ENCODE measurements at regions of chrX and their contacts with region 1.

Region 1: DNA sequence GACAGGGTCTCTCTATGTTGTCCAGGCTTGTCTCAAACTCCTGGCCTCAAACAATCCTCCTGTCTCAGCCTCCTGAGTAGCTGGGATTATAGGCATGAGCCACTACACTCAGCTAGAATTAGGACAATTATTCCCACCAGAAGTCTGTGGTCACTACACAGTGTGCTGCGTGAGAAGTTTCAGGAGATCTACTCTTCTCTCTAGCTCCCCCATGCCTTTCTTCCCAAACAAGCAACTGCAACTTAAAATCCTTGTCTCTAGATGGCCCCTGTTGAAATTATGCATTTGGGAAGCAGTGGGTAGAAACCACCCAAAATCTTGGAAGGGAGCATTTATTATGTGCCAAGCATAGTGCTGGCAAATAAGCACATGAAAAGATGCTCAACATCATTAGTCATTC is 21.1 kb upstream of the MAP7D3 start:
- DNase-seq: no peak
- H3K4me3 ChIP-seq: no peak overlapping the region
- H3K27ac ChIP-seq: no peak overlapping the region
- H3K4me1 ChIP-seq: peaks cover 0 to 8% (median 2%) of the 10 kb centered on the region in 4 donors
- H3K27me3 ChIP-seq: no peaks in the 10 kb centered on the region
- CTCF ChIP-seq: no peak
- EP300 ChIP-seq: no peak
- POLR2A ChIP-seq: no peak

Region 2: GRCh38 chrX:134478374-134478773 is 1794.0 kb before region 1 on chrX:
- in situ Hi-C with region 1: no loop called
- intact Hi-C with region 1: loop called (anchors 5 kb)
- DNase-seq: no peak
- H3K4me3 ChIP-seq: no peak overlapping the region
- H3K27ac ChIP-seq: no peak overlapping the region
- H3K4me1 ChIP-seq: no peaks in the 10 kb centered on the region
- H3K27me3 ChIP-seq: no peaks in the 10 kb centered on the region
- CTCF ChIP-seq: no peak
- EP300 ChIP-seq: no peak
- POLR2A ChIP-seq: no peak

Region 3: GRCh38 chrX:135973548-135974278 is 298.6 kb before region 1 on chrX and contains the start of gene MMGT1:
- in situ Hi-C with region 1: no loop called
- intact Hi-C with region 1: no loop called
- DNase-seq: peak; percentile 85
- H3K4me3 ChIP-seq: peak within 1 kb of the TSS; percentile 47 to 83 (median 69)
- H3K27ac ChIP-seq: peak within 1 kb of the TSS; percentile 89 to 96 (median 95)
- H3K4me1 ChIP-seq: peaks cover 0 to 16% (median 6%) of the 10 kb centered on the region in 4 donors
- H3K27me3 ChIP-seq: no peaks in the 10 kb centered on the region
- CTCF ChIP-seq: peak in 3 of 5 experiments; percentile 12 to 51 (median 33)
- EP300 ChIP-seq: no peak
- POLR2A ChIP-seq: peak; percentile 65
- total RNA-seq, gene MMGT1: 2.0 to 27.0 (median 15.7) TPM

Region 4: DNA sequence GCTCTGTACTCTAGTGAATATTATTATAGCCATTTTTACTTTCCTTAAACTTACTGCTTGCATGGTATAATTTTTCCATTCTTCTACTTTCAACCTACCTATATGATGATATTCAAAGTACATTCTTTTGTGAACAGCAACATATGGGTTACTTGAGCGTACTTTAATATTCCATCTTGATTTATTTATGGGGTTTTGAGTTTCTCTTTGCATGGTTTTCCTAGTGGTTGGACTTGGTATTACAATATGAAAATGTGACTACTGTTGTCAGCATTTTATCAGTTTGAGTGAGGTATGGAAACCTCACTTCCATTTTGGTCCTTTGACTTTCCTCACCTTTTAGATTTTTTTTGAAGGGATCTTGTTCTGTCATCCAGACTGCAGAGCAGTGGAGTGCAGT is 64.3 kb after region 1 on chrX:
- in situ Hi-C with region 1: no loop called
- intact Hi-C with region 1: no loop called
- DNase-seq: no peak
- H3K4me3 ChIP-seq: no peak overlapping the region
- H3K27ac ChIP-seq: no peak overlapping the region
- H3K4me1 ChIP-seq: no peaks in the 10 kb centered on the region
- H3K27me3 ChIP-seq: no peaks in the 10 kb centered on the region
- CTCF ChIP-seq: peak in 3 of 5 experiments; percentile 13 to 22 (median 21)
- EP300 ChIP-seq: no peak
- POLR2A ChIP-seq: no peak

Region 5: GRCh38 chrX:136405126-136405525 is 132.8 kb after region 1 on chrX:
- in situ Hi-C with region 1: no loop called
- intact Hi-C with region 1: no loop called
- DNase-seq: no peak
- H3K4me3 ChIP-seq: no peak overlapping the region
- H3K27ac ChIP-seq: no peak overlapping the region
- H3K4me1 ChIP-seq: no peaks in the 10 kb centered on the region
- H3K27me3 ChIP-seq: no peaks in the 10 kb centered on the region
- CTCF ChIP-seq: no peak
- EP300 ChIP-seq: no peak
- POLR2A ChIP-seq: no peak